HepG2 (cell line): ENCODE measurements at regions of chr3 and their contacts with region 1.

Region 1: DNA sequence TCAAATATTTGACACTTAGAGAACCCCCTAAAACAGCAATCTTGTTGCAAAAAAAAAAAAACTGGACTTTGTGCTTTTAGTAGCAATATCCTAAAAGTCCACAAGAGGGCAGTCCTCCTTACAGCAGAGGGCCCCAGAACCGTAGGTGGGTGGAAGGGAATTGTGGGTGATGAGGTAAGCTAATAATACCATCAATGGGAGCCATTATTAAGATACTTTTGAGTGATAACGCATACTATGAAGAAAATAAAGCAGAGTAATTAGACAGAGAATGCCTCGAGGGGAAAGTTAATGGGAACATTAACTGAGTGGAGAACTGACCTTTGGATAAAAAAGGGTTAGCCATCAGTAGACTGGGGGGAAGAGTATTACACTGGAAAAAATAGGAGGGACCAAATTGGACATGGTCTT is 229.9 kb downstream of the THRB start:
- DNase-seq: peak; percentile 53
- ATAC-seq: peak; percentile 73
- H3K4me3 ChIP-seq: no peak overlapping the region
- H3K27ac ChIP-seq: no peak overlapping the region
- H3K4me1 ChIP-seq: peaks cover 5% of the 10 kb centered on the region; the same call in 1 of the 2 replicates
- H3K27me3 ChIP-seq: no peaks in the 10 kb centered on the region
- CTCF ChIP-seq: peak; percentile 75
- EP300 ChIP-seq: no peak
- POLR2A ChIP-seq: no peak
- RAD21 ChIP-seq: peak; percentile 83

Region 2: GRCh38 chr3:24377218-24377993 is 112.7 kb after region 1 on chr3:
- CTCF ChIA-PET with region 1: no interaction called
- POLR2A ChIA-PET with region 1: no interaction called
- in situ Hi-C with region 1: no loop called
- intact Hi-C with region 1: loop called (anchors 10 kb)
- DNase-seq: no peak
- ATAC-seq: no peak
- H3K4me3 ChIP-seq: no peak overlapping the region
- H3K27ac ChIP-seq: no peak overlapping the region
- H3K4me1 ChIP-seq: peaks cover 55% of the 10 kb centered on the region
- H3K27me3 ChIP-seq: no peaks in the 10 kb centered on the region
- CTCF ChIP-seq: no peak
- EP300 ChIP-seq: no peak
- POLR2A ChIP-seq: no peak
- RAD21 ChIP-seq: no peak

Region 3: GRCh38 chr3:24460974-24461373 is 196.2 kb after region 1 on chr3:
- CTCF ChIA-PET with region 1: no interaction called
- POLR2A ChIA-PET with region 1: no interaction called
- in situ Hi-C with region 1: no loop called
- intact Hi-C with region 1: no loop called
- DNase-seq: no peak
- ATAC-seq: no peak
- H3K4me3 ChIP-seq: no peak overlapping the region
- H3K27ac ChIP-seq: no peak overlapping the region
- H3K4me1 ChIP-seq: no peaks in the 10 kb centered on the region
- H3K27me3 ChIP-seq: no peaks in the 10 kb centered on the region
- CTCF ChIP-seq: no peak
- EP300 ChIP-seq: no peak
- POLR2A ChIP-seq: no peak
- RAD21 ChIP-seq: no peak

Region 4: DNA sequence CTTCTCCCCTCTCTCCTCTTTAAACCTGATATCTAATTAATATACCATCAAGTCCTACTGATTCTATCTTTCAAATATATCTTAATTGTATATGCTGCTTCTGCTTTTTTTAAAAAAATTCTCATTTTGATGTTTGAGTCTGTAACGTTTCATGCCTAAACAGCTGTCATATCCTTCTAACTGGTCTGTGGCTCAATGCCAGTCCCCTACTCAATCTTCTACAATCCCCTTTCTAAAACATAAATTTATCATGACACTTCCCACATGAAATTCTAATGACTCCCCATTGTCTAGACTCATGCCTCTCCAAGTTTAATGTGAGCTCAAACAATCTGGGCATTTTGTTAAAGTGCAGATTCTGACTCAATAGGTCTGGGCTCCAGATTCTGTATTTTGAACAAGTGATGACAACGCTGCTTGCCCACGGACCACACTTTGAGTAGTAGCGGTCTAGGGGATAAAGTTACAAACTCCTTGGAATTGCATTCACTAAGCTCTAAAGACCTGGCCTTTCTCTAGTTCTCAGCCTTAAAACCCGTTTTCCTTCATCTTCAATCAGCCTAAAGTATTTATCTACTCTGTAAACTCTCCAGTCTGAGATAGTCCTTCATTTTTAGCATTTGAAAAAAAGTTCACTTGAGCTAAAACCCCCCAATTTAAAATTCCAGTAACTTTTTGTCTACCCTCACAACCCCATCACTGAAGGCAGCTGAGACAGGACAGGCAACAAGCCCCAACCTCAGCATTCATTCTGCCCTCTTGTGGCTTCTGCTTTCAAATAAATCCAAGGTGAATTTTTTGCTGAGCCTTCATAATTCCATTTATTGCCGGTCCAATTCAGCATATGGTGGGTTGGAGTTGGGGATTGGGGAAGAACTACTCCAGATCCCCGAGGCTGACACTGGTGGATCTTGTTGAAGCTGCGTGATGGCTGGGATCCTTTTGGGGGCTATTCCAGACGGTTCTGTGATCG is 318.0 kb after region 1 on chr3:
- CTCF ChIA-PET with region 1: interaction called, 3 read pairs
- POLR2A ChIA-PET with region 1: no interaction called
- in situ Hi-C with region 1: no loop called
- intact Hi-C with region 1: loop called (anchors 1 kb)
- DNase-seq: peak; percentile 30
- ATAC-seq: peak; percentile 63
- H3K4me3 ChIP-seq: no peak overlapping the region
- H3K27ac ChIP-seq: no peak overlapping the region
- H3K4me1 ChIP-seq: peaks cover 4% of the 10 kb centered on the region; the same call in 1 of the 2 replicates
- H3K27me3 ChIP-seq: peaks cover 0 to 4% of the 10 kb centered on the region in 2 experiments; a peak in 2 of 5 replicates
- CTCF ChIP-seq: peak; percentile 60
- EP300 ChIP-seq: no peak
- POLR2A ChIP-seq: no peak
- RAD21 ChIP-seq: peak; percentile 22; the same call in 1 of the 2 replicates